ENCODE measurements at regions of chr6 and their contacts with region 1.

Region 1: GRCh38 chr6:30590994-30591393 is 19.8 kb downstream of the ABCF1 start:
- DNase-seq: peak; percentile 72
- H3K4me3 ChIP-seq: no peak overlapping the region
- H3K27ac ChIP-seq: peak overlapping the region; percentile 67 to 69
- H3K4me1 ChIP-seq: peaks cover 14% of the 10 kb centered on the region
- H3K27me3 ChIP-seq: no peaks in the 10 kb centered on the region
- CTCF ChIP-seq: no peak
- POLR2A ChIP-seq: no peak

Region 2: GRCh38 chr6:29524444-29525310 is 1066.3 kb before region 1 on chr6:
- intact Hi-C with region 1: no loop called
- DNase-seq: no peak
- H3K4me3 ChIP-seq: no peak overlapping the region
- H3K27ac ChIP-seq: no peak overlapping the region
- H3K4me1 ChIP-seq: no peaks in the 10 kb centered on the region
- H3K27me3 ChIP-seq: no peaks in the 10 kb centered on the region
- CTCF ChIP-seq: no peak
- POLR2A ChIP-seq: no peak

Region 3: DNA sequence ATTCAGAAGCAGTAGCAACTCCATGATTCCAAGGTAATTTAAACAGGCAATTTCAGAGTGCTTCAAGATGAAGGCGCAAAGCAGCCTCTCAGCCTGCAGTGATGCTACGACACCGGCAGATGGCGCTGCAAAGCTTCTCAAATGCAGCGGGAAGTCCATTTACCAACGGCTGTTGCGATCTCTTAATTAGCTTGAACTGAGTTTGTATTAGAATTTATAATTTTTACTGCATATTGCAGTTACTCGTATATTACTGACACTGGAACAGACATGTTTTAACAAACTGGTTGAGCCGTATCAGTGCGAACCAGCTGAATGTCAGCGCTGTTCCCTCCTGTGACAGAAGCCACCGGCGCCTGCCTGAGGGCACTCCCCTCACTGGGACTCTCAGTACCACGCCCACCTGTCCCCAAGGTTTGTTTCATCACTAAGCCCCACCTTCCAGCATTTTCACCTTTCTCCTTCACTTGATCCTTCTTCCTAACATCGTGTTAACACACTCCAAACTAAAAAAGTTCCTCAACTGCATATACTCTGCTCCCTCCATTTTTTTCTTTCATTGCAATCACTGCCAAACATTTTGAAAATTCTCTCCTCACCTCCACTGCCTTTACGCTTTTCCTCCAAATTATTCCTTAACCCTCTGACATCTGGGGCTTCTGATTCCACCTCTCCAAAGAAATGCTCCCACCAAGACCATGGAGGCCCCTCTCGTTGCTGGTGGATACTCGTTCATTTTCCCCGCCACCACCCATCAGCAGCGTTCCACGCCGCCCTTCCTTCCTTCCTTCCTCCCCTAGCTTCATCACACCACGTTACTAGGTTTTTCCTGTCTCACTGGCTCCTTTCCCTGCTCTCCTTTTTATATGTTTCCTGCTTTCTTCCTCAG is 49.2 kb before region 1 on chr6:
- intact Hi-C with region 1: loop called (anchors 10 kb)
- DNase-seq: peak; percentile 74
- H3K4me3 ChIP-seq: peak overlapping the region; percentile 7 to 17
- H3K27ac ChIP-seq: no peak overlapping the region
- H3K4me1 ChIP-seq: no peaks in the 10 kb centered on the region
- H3K27me3 ChIP-seq: no peaks in the 10 kb centered on the region
- CTCF ChIP-seq: peak; percentile 83 to 94 (median 92)
- POLR2A ChIP-seq: no peak

Region 4: DNA sequence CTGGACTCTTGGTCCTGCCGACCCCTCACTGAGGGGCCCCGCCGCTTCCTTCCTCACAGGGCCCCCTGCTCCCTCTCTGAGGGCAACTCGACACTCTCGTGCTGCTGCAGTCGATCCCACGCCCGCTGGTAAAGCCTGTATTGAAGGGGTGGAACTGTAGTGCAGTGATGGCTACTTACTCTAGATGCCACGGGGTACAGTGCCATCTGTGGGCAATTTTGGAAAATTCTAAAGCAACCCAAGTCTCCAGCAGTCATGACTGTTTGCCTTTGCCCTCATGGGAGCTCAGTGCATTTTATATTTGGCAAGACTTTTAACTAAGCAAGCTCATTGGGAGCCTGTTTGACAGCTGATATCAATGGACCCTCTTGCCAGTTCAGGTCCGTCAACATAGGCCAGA is 49.5 kb after region 1 on chr6:
- intact Hi-C with region 1: no loop called
- DNase-seq: no peak
- H3K4me3 ChIP-seq: no peak overlapping the region
- H3K27ac ChIP-seq: no peak overlapping the region
- H3K4me1 ChIP-seq: no peaks in the 10 kb centered on the region
- H3K27me3 ChIP-seq: no peaks in the 10 kb centered on the region
- CTCF ChIP-seq: no peak
- POLR2A ChIP-seq: no peak

Region 5: GRCh38 chr6:30974488-30975252 is 383.7 kb after region 1 on chr6:
- intact Hi-C with region 1: no loop called
- DNase-seq: no peak
- H3K4me3 ChIP-seq: no peak overlapping the region
- H3K27ac ChIP-seq: no peak overlapping the region
- H3K4me1 ChIP-seq: no peaks in the 10 kb centered on the region
- H3K27me3 ChIP-seq: no peaks in the 10 kb centered on the region
- CTCF ChIP-seq: no peak
- POLR2A ChIP-seq: no peak

Region 6: DNA sequence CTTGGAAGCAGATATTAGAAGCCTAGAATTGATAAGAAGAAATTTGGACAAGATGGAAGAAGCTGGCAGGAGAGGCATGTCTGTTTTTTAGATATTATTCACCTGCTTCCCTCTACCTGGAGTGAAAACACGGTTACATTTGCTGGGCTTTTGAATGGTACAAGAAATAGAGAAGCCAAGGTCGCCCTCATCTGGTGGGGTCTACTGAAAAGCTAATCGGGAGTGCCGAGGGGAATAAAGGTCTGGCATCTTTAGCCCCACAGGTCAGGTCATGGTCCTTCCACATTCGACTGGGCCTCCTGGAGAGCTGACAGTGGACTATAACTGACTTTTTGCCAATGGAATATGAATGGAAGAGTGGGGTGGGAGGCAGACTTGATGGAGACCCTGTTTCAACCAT is 1331.9 kb after region 1 on chr6:
- intact Hi-C with region 1: no loop called
- DNase-seq: no peak
- H3K4me3 ChIP-seq: no peak overlapping the region
- H3K27ac ChIP-seq: no peak overlapping the region
- H3K4me1 ChIP-seq: peaks cover 4% of the 10 kb centered on the region
- H3K27me3 ChIP-seq: no peaks in the 10 kb centered on the region
- CTCF ChIP-seq: no peak
- POLR2A ChIP-seq: no peak